ENCODE measurements at regions of chr7 and their contacts with region 1.

Region 1: GRCh38 chr7:47474937-47475878 is 106.7 kb downstream of the TNS3 start:
- DNase-seq: no peak
- H3K4me3 ChIP-seq: no peak overlapping the region
- H3K27ac ChIP-seq: no peak overlapping the region
- H3K4me1 ChIP-seq: peaks cover 11% of the 10 kb centered on the region
- H3K27me3 ChIP-seq: no peaks in the 10 kb centered on the region
- CTCF ChIP-seq: no peak
- POLR2A ChIP-seq: no peak

Region 2: GRCh38 chr7:45944058-45944457 is 1531.2 kb before region 1 on chr7:
- intact Hi-C with region 1: loop called (anchors 5 kb)
- DNase-seq: no peak
- H3K4me3 ChIP-seq: no peak overlapping the region
- H3K27ac ChIP-seq: no peak overlapping the region
- H3K4me1 ChIP-seq: no peaks in the 10 kb centered on the region
- H3K27me3 ChIP-seq: no peaks in the 10 kb centered on the region
- CTCF ChIP-seq: no peak
- POLR2A ChIP-seq: no peak

Region 3: GRCh38 chr7:48158404-48158803 is 683.2 kb after region 1 on chr7:
- intact Hi-C with region 1: no loop called
- DNase-seq: no peak
- H3K4me3 ChIP-seq: no peak overlapping the region
- H3K27ac ChIP-seq: no peak overlapping the region
- H3K4me1 ChIP-seq: no peaks in the 10 kb centered on the region
- H3K27me3 ChIP-seq: no peaks in the 10 kb centered on the region
- CTCF ChIP-seq: no peak
- POLR2A ChIP-seq: no peak